ENCODE measurements at regions of chr7 and their contacts with region 1.

Region 1: GRCh38 chr7:21767300-21767900 is 178.3 kb downstream of the CDCA7L start:
- DNase-seq: peak; percentile 88
- H3K4me3 Mint-ChIP-seq: no peak overlapping the region
- H3K27ac Mint-ChIP-seq: no peak overlapping the region
- H3K4me1 Mint-ChIP-seq: no peaks in the 10 kb centered on the region
- H3K27me3 Mint-ChIP-seq: peaks cover 10% of the 10 kb centered on the region
- CTCF ChIP-seq: peak; percentile 85

Region 2: DNA sequence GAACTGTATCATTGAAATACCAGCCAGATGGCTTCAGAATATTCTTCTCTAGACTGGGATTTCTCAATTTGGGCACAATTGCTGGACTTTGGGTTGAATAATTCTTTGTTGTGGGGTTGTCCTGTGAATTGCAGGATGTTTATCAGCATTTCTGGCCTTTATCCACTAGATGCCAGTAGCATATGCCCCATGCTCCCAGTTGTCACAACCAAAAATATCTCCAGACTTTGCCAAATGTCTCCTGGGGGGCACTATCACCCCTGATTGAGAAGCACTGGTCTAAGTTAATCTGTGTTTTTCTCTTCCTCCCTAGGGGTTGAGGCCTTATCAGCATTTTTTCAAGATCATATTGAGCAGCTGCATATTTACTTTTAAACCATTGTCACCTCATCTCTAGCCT is 775.9 kb before region 1 on chr7:
- CTCF ChIA-PET with region 1: no interaction called
- POLR2A ChIA-PET with region 1: no interaction called
- intact Hi-C with region 1: loop called (anchors 10 kb)
- DNase-seq: peak; percentile 24
- H3K4me3 Mint-ChIP-seq: no peak overlapping the region
- H3K27ac Mint-ChIP-seq: no peak overlapping the region
- H3K4me1 Mint-ChIP-seq: no peaks in the 10 kb centered on the region
- H3K27me3 Mint-ChIP-seq: no peaks in the 10 kb centered on the region
- CTCF ChIP-seq: peak; percentile 40

Region 3: DNA sequence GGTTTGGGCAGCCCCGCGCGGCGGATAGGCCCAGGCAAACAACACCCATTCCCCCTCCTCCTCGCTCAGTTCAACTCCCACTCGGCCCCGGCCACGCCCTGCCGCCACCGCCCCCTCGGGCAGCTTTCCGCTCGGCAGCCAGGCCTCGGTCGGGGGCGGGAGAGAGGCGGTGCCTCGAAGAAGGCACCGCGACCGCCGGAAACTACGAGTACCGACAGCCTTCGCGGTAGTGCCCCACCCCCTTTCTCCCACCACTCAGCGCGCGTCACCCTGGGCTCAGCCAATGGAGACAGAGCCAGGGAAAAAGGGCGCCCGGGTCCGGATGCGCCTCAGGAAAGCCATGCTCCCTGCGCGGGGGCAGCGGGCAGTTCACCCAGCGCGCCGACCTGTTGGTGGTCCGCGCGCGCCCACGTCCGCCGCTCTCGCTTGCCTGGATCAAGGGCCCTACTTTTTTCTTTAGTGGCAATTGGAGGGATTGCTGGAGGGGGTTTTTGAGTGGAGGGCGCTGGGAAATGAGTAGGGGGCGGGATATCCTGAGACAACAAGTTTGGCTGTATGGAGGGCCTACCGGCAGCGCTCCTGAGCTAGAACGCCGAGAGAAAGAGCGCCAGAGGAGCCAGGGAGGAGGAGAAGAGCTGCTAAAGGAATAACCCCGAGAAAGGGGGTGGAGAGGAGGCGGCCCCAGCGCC is 340.1 kb before region 1 on chr7:
- CTCF ChIA-PET with region 1: interaction called, 3 read pairs
- POLR2A ChIA-PET with region 1: interaction called, 4 read pairs
- intact Hi-C with region 1: loop called (anchors 2 kb)
- DNase-seq: peak; percentile 98
- H3K4me3 Mint-ChIP-seq: peak overlapping the region; percentile 100
- H3K27ac Mint-ChIP-seq: peak overlapping the region; percentile 99
- H3K4me1 Mint-ChIP-seq: peaks cover 6% of the 10 kb centered on the region
- H3K27me3 Mint-ChIP-seq: no peaks in the 10 kb centered on the region
- CTCF ChIP-seq: no peak

Region 4: GRCh38 chr7:21542891-21543527 is 224.4 kb before region 1 on chr7 and contains the start of gene DNAH11:
- CTCF ChIA-PET with region 1: no interaction called
- POLR2A ChIA-PET with region 1: no interaction called
- intact Hi-C with region 1: loop called (anchors 10 kb)
- DNase-seq: peak; percentile 25
- H3K4me3 Mint-ChIP-seq: peak within 1 kb of the TSS; percentile 75
- H3K27ac Mint-ChIP-seq: no peak within 1 kb of the TSS
- H3K4me1 Mint-ChIP-seq: peaks cover 6% of the 10 kb centered on the region
- H3K27me3 Mint-ChIP-seq: no peaks in the 10 kb centered on the region
- CTCF ChIP-seq: no peak
- total RNA-seq, gene DNAH11: 0.81 and 0.91 TPM in 2 replicates

Region 5: DNA sequence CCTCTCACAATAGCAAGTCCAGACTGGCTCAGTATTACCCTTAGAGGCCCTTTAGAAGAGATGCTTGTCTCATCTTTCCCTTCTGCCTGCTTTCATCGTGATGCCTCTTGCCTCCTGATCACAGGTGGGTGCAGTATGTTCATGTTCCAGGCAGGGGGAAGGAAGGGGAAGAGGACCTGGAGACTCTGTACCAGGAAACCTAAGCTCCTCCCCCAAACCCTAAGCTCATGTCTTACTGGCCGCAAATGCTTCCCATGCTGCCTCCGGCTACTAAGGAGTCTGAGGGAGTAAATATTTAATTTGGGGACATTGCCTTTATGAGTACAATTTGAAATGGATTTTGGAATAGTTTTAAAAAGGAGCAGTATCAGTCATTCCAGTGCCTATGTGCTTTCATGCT is 14.3 kb before region 1 on chr7:
- CTCF ChIA-PET with region 1: interaction called, 15 read pairs
- POLR2A ChIA-PET with region 1: interaction called, 5 read pairs
- intact Hi-C with region 1: no loop called
- DNase-seq: no peak
- H3K4me3 Mint-ChIP-seq: no peak overlapping the region
- H3K27ac Mint-ChIP-seq: no peak overlapping the region
- H3K4me1 Mint-ChIP-seq: no peaks in the 10 kb centered on the region
- H3K27me3 Mint-ChIP-seq: no peaks in the 10 kb centered on the region
- CTCF ChIP-seq: no peak

Region 6: GRCh38 chr7:22001345-22002004 is 234.1 kb after region 1 on chr7:
- CTCF ChIA-PET with region 1: interaction called, 26 read pairs
- POLR2A ChIA-PET with region 1: no interaction called
- intact Hi-C with region 1: loop called (anchors 1 kb)
- DNase-seq: peak; percentile 73
- H3K4me3 Mint-ChIP-seq: peak overlapping the region; percentile 37
- H3K27ac Mint-ChIP-seq: no peak overlapping the region
- H3K4me1 Mint-ChIP-seq: peaks cover 4% of the 10 kb centered on the region
- H3K27me3 Mint-ChIP-seq: no peaks in the 10 kb centered on the region
- CTCF ChIP-seq: peak; percentile 64

Measured in MCF 10A (cell line).